GM23248 (cell line): ENCODE measurements at regions of chr18 and their contacts with region 1.

Region 1: DNA sequence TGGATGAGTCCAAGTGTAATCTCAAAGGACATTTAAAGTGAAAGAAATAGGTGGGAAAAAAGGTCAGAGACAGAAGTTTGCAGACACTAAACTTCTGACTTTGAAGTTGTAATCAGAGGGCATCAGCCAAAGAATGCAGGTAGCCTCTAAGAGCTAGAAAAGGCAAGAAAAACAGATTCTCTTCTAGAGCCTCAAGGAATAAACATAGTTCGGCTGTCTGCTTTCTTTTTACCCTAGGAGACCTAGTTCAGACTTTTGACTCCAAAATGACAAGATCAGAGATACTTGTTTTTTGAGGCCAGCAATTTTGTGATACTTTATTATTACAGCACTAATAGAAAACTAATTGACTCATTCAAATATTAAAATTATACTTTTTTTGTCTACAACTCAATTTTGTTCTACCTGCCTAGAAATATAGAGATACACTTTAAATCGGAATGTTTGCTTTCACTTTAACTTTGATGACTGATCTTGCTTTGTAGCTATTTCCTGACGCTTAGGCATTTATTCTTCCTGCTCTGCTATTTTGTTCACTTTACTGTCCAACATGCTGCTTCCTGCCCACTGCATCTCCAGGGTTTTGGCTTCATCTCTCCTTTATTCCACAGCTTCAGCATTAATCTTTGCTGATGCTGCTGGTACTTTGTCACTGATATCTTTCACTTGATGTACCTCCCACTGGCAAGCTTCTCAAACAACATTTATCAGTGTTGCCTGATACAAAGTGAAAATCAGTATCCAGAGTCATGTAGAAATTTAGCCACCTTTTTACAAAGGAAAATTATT is 272.5 kb downstream of the DSEL start:
- DNase-seq: peak; percentile 38
- H3K4me3 ChIP-seq: peak overlapping the region; percentile 64
- H3K27ac ChIP-seq: peak overlapping the region; percentile 37
- H3K4me1 ChIP-seq: peaks cover 4% of the 10 kb centered on the region; the same call in 1 of the 2 replicates
- H3K27me3 ChIP-seq: no peaks in the 10 kb centered on the region

Region 2: DNA sequence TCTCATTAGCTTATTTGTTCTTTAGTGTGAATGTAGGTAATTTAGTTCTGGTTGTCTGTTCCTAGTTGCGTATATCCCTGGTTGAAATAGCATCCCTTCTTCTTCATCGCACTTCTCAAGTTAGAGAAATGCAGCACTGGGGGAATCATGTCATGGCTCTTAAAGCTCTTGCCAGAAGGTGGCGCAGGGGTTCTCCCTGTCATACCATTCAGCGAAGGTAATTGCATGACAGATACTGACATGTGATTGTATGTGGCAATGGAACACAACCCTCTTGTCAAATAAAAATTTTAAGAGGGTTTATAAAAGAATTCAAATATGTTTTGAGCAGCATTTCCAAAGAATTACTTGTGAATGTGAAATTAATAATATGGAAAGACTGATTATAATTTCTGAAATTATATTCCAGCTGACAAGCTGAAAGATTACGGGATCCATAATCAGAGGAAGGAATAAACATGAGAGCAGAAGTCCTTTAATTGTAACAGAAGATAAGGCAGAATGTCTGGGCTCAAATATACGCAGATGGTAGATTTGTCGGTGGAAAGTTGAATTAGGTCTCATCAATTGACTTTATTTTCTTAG is 139.2 kb before region 1 on chr18:
- in situ Hi-C with region 1: no loop called
- DNase-seq: peak; percentile 84
- H3K4me3 ChIP-seq: no peak overlapping the region
- H3K27ac ChIP-seq: no peak overlapping the region
- H3K4me1 ChIP-seq: no peaks in the 10 kb centered on the region
- H3K27me3 ChIP-seq: 0 out of 2 replicates have a peak, but pooled peaks cover 4% of the 10 kb centered on the region

Region 3: GRCh38 chr18:67864677-67865340 is 620.8 kb after region 1 on chr18:
- in situ Hi-C with region 1: loop called (anchors 25 kb)
- DNase-seq: peak; percentile 94
- H3K4me3 ChIP-seq: no peak overlapping the region
- H3K27ac ChIP-seq: peak overlapping the region; percentile 57
- H3K4me1 ChIP-seq: peaks cover 47% of the 10 kb centered on the region
- H3K27me3 ChIP-seq: no peaks in the 10 kb centered on the region